AG04450 (cell line): ENCODE measurements at regions of chr3 and their contacts with region 1.

Region 1: GRCh38 chr3:187291001-187291511 is 481 bp downstream of the MASP1 start:
- DNase-seq: peak; percentile 24
- H3K4me3 ChIP-seq: peak overlapping the region; percentile 73
- H3K27ac ChIP-seq: peak overlapping the region; percentile 47
- H3K27me3 ChIP-seq: no peaks in the 10 kb centered on the region
- CTCF ChIP-seq: no peak

Region 2: GRCh38 chr3:187227658-187228258 is 63.3 kb before region 1 on chr3:
- CTCF ChIA-PET with region 1: interaction called, 10 read pairs
- POLR2A ChIA-PET with region 1: no interaction called
- DNase-seq: peak; percentile 43
- H3K4me3 ChIP-seq: no peak overlapping the region
- H3K27ac ChIP-seq: no peak overlapping the region
- H3K27me3 ChIP-seq: no peaks in the 10 kb centered on the region
- CTCF ChIP-seq: no peak

Region 3: GRCh38 chr3:187305881-187306280 is 14.8 kb after region 1 on chr3:
- CTCF ChIA-PET with region 1: interaction called, 10 read pairs
- POLR2A ChIA-PET with region 1: no interaction called
- DNase-seq: no peak
- H3K4me3 ChIP-seq: no peak overlapping the region
- H3K27ac ChIP-seq: no peak overlapping the region
- H3K27me3 ChIP-seq: no peaks in the 10 kb centered on the region
- CTCF ChIP-seq: no peak